ENCODE measurements at regions of chr17 and their contacts with region 1.

Region 1: DNA sequence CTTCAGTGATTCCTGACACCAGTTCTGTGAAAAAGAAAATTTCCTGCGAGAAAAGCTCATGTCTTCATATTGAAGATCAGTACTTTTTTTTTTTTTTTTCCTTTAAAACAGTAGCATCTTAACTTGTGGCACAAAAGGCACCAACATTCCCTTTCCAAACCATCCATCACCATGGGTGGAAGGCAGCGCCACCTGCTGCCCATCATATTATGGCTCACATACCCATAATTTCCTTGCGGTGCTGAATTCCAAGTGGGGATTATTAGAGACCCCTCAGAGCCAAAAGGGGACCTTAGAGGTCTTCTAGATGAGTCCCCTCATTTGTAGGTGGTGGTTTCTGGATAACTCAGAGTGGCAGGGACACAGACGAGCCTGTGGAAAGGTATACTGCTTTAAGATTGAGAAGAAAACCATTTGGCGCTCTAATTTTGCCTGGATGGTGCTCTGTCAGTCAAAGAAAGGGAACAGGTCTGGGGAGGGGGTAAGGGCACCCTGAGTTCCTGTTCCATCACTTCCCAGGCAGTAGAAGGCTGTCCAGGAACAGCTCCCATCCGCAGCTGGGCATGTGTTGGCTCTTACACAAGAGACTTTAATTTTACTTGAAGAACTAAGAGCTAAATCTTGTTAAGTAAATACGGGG is 7.9 kb upstream of the SOST start:
- DNase-seq: peak; percentile 51
- ATAC-seq: peak; percentile 56; the same call in 1 of the 2 replicates
- H3K4me3 ChIP-seq: no peak overlapping the region
- H3K27ac ChIP-seq: no peak overlapping the region
- H3K4me1 ChIP-seq: peaks cover 2% of the 10 kb centered on the region; the same call in 1 of the 2 replicates
- H3K27me3 ChIP-seq: no peaks in the 10 kb centered on the region
- CTCF ChIP-seq: peak; percentile 75
- POLR2A ChIP-seq: no peak
- RAD21 ChIP-seq: peak; percentile 55

Region 2: DNA sequence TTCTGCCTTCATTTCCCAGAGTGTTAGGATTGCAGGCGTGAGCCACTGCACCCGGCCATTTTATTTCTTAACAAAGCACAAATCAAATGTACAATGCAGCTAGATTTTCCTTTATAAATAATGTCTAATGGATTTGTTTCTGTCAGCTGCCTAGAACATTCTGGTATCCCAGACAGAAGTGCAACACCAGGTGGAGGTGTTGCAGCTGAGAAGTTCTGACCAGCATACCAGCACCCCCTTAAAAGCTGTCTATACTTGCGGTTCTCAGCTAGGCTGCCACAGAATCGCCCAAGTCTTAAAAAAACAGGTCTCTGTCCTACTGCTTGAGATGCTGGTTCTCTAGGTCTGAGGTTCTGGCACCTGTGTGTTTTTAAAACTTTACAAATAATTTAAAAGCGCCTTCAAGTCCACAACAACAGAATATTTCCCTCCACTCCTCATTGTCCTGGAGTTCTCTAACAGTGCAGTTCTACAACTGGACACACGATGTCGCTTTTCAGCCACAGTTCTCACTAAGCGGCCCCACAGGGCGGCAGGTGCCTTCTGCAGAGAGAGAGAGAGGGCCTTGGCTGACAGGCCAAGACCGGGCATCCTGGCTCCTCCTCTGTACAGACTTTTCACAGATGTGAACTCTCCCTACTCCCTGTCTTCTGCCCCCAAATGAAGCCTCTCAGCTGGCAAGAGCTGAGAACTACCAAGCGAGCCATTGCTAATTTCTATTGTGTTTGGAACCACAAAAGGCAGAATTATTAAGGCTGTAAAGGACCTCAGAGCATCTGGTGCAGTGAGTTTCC is 72.3 kb before region 1 on chr17:
- CTCF ChIA-PET with region 1: interaction called, 62 read pairs
- POLR2A ChIA-PET with region 1: no interaction called
- dilution Hi-C with region 1: no loop called
- in situ Hi-C with region 1: no loop called
- intact Hi-C with region 1: no loop called
- DNase-seq: peak; percentile 75
- ATAC-seq: peak; percentile 100
- H3K4me3 ChIP-seq: no peak overlapping the region
- H3K27ac ChIP-seq: no peak overlapping the region
- H3K4me1 ChIP-seq: 0 out of 2 replicates have a peak, but pooled peaks cover 2% of the 10 kb centered on the region
- H3K27me3 ChIP-seq: peaks cover 19% of the 10 kb centered on the region
- CTCF ChIP-seq: peak; percentile 98
- POLR2A ChIP-seq: 0 out of 2 replicates have a peak, but pooled peaks have one; percentile 34
- RAD21 ChIP-seq: peak; percentile 99